HepG2 (cell line): ENCODE measurements at regions of chr4 and their contacts with region 1.

Region 1: DNA sequence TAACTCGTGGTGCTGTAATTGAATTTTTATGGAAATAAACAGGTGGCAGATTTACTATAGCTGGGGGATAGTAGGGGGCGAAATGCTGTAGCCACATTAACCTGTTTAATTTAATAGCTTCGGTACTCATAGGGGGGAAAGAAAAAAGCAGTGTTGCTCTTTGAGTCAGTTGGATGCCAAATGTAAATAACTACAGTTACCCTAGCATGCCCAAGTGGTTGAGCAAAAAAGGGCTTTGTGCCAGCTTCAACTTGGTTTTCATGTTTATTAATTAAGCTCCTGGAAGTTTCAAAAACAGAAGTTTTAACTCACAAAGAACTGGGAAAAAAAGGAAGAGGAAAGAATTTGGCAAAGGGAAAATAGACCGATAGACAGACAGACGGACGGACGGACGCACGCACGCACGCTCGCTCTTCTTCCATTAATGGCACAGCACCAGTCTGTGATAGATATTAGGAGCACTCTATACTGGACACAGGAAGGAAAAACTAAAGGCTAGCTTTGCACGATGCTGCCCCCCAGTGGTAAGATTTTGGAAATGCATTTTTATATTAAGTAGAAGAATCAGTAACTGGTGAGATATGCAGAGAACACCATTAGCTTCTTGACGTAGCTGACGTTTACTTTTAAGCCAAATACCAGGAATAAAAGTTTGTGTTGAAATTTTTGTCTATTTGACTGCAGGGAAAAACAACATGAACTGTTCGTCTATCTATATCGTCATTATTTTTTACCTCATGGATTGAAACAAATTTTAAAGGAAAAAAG is 151.8 kb downstream of the SLC7A11 start:
- DNase-seq: peak; percentile 64
- ATAC-seq: peak; percentile 87
- H3K4me3 ChIP-seq: peak overlapping the region in 1 of 3 experiments; percentile 24; a peak in 1 of 6 replicates
- H3K27ac ChIP-seq: no peak overlapping the region
- H3K4me1 ChIP-seq: peaks cover 30% of the 10 kb centered on the region
- H3K27me3 ChIP-seq: no peaks in the 10 kb centered on the region
- CTCF ChIP-seq: peak; percentile 80
- EP300 ChIP-seq: no peak
- POLR2A ChIP-seq: no peak
- RAD21 ChIP-seq: 0 out of 2 replicates have a peak, but pooled peaks have one; percentile 45

Region 2: GRCh38 chr4:137819964-137820383 is 270.4 kb before region 1 on chr4:
- CTCF ChIA-PET with region 1: no interaction called
- POLR2A ChIA-PET with region 1: no interaction called
- in situ Hi-C with region 1: no loop called
- intact Hi-C with region 1: loop called (anchors 1 kb)
- DNase-seq: peak; percentile 45
- ATAC-seq: peak; percentile 97
- H3K4me3 ChIP-seq: no peak overlapping the region
- H3K27ac ChIP-seq: no peak overlapping the region
- H3K4me1 ChIP-seq: no peaks in the 10 kb centered on the region
- H3K27me3 ChIP-seq: no peaks in the 10 kb centered on the region
- CTCF ChIP-seq: peak; percentile 78
- EP300 ChIP-seq: no peak
- POLR2A ChIP-seq: no peak
- RAD21 ChIP-seq: peak; percentile 71

Region 3: DNA sequence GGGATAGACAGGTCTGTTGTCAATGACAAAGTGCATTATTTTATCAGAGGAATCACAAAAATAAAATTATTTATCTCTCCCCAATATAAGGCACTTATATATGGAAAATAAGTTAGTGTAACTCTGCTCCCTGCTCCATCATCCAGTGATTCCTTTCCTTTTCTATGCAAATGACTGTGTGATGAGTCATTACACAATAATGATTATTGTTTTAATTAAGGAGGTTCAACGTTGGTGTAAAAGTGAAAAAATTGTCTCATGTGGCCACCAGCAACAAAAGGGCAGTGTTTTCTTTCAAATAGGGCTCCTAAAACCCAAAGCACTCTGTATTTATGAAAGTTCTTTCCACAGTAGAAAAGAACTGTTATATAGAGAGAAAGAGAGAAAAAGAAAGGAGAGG is 135.1 kb after region 1 on chr4:
- CTCF ChIA-PET with region 1: no interaction called
- POLR2A ChIA-PET with region 1: no interaction called
- in situ Hi-C with region 1: no loop called
- intact Hi-C with region 1: no loop called
- DNase-seq: no peak
- ATAC-seq: no peak
- H3K4me3 ChIP-seq: no peak overlapping the region
- H3K27ac ChIP-seq: no peak overlapping the region
- H3K4me1 ChIP-seq: no peaks in the 10 kb centered on the region
- H3K27me3 ChIP-seq: no peaks in the 10 kb centered on the region
- CTCF ChIP-seq: no peak
- EP300 ChIP-seq: no peak
- POLR2A ChIP-seq: no peak
- RAD21 ChIP-seq: no peak